ENCODE measurements at regions of chr2 and their contacts with region 1.

Region 1: GRCh38 chr2:33475224-33476130 is 972 bp upstream of the RASGRP3 start:
- DNase-seq: peak; percentile 87
- H3K4me3 ChIP-seq: peak overlapping the region; percentile 46 to 69 (median 64)
- H3K27ac ChIP-seq: peak overlapping the region; percentile 88 to 90 (median 89)
- H3K4me1 ChIP-seq: peaks cover 4 to 18% (median 14%) of the 10 kb centered on the region in 4 donors
- H3K27me3 ChIP-seq: no peaks in the 10 kb centered on the region
- CTCF ChIP-seq: peak; percentile 68 to 80 (median 73)
- EP300 ChIP-seq: no peak
- POLR2A ChIP-seq: no peak

Region 2: GRCh38 chr2:31877008-31877407 is 1598.5 kb before region 1 on chr2:
- in situ Hi-C with region 1: no loop called
- intact Hi-C with region 1: loop called (anchors 5 kb)
- DNase-seq: no peak
- H3K4me3 ChIP-seq: no peak overlapping the region
- H3K27ac ChIP-seq: no peak overlapping the region
- H3K4me1 ChIP-seq: no peaks in the 10 kb centered on the region
- H3K27me3 ChIP-seq: no peaks in the 10 kb centered on the region
- CTCF ChIP-seq: no peak
- EP300 ChIP-seq: no peak
- POLR2A ChIP-seq: no peak

Region 3: GRCh38 chr2:33559328-33559727 is 83.9 kb after region 1 on chr2:
- in situ Hi-C with region 1: no loop called
- intact Hi-C with region 1: no loop called
- DNase-seq: no peak
- H3K4me3 ChIP-seq: no peak overlapping the region
- H3K27ac ChIP-seq: no peak overlapping the region
- H3K4me1 ChIP-seq: no peaks in the 10 kb centered on the region
- H3K27me3 ChIP-seq: no peaks in the 10 kb centered on the region
- CTCF ChIP-seq: no peak
- EP300 ChIP-seq: no peak
- POLR2A ChIP-seq: no peak

Region 4: DNA sequence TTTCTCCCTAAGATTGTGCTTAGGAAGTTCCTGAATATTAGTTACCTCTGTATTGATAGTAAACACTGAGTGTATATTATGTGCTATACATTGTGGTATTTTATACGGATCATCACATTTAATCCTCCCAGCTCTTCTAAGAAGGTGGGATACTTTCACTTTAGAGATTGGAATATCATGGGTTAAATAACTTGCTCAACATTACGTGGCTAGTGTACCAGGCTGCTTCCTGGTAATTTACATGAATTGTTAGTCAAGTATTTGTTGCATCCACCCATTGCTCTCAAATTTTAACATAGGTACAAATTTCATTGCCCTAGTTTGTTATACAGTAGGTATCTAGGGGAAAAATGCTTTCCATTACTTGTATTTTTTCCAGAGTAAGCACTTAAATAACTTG is 102.2 kb after region 1 on chr2:
- in situ Hi-C with region 1: loop called in 1 of 4 experiments (anchors 10 kb)
- intact Hi-C with region 1: loop called (anchors 10 kb)
- DNase-seq: no peak
- H3K4me3 ChIP-seq: no peak overlapping the region
- H3K27ac ChIP-seq: no peak overlapping the region
- H3K4me1 ChIP-seq: no peaks in the 10 kb centered on the region
- H3K27me3 ChIP-seq: no peaks in the 10 kb centered on the region
- CTCF ChIP-seq: no peak
- EP300 ChIP-seq: no peak
- POLR2A ChIP-seq: no peak

Region 5: GRCh38 chr2:33583194-33583938 is 107.9 kb after region 1 on chr2:
- in situ Hi-C with region 1: loop called in 1 of 4 experiments (anchors 10 kb)
- intact Hi-C with region 1: loop called (anchors 10 kb)
- DNase-seq: no peak
- H3K4me3 ChIP-seq: no peak overlapping the region
- H3K27ac ChIP-seq: no peak overlapping the region
- H3K4me1 ChIP-seq: peaks cover 0 to 17% (median 0%) of the 10 kb centered on the region in 4 donors
- H3K27me3 ChIP-seq: no peaks in the 10 kb centered on the region
- CTCF ChIP-seq: peak; percentile 67 to 78 (median 71)
- EP300 ChIP-seq: no peak
- POLR2A ChIP-seq: no peak